ENCODE measurements at regions of chr5 and their contacts with region 1.

Region 1: GRCh38 chr5:73431204-73431851 is 17.2 kb downstream of the FOXD1 start:
- DNase-seq: no peak
- H3K4me3 ChIP-seq: no peak overlapping the region
- H3K27ac ChIP-seq: no peak overlapping the region
- H3K27me3 ChIP-seq: no peaks in the 10 kb centered on the region
- CTCF ChIP-seq: no peak

Region 2: DNA sequence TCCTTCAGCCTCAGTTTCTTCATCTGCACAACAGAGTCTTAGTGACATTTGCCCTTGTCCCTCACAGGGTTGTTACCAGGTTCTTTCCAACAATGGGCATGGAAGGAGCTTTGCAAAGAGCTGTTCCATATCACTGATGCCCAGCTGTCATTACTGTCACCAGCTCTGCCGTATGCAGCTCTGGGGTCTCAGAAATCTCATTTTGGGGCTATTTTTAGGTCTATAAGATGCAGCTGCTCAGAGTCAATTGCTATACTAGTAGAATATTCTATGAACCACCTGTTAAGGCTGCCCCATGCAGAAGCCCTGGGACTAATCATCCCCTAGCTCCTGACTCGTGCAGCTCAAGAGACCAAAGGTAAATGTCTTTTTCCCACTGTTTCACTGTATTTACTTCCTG is 720.0 kb before region 1 on chr5:
- CTCF ChIA-PET with region 1: no interaction called
- POLR2A ChIA-PET with region 1: no interaction called
- DNase-seq: no peak
- H3K4me3 ChIP-seq: no peak overlapping the region
- H3K27ac ChIP-seq: no peak overlapping the region
- H3K27me3 ChIP-seq: peaks cover 28% of the 10 kb centered on the region
- CTCF ChIP-seq: no peak

Region 3: DNA sequence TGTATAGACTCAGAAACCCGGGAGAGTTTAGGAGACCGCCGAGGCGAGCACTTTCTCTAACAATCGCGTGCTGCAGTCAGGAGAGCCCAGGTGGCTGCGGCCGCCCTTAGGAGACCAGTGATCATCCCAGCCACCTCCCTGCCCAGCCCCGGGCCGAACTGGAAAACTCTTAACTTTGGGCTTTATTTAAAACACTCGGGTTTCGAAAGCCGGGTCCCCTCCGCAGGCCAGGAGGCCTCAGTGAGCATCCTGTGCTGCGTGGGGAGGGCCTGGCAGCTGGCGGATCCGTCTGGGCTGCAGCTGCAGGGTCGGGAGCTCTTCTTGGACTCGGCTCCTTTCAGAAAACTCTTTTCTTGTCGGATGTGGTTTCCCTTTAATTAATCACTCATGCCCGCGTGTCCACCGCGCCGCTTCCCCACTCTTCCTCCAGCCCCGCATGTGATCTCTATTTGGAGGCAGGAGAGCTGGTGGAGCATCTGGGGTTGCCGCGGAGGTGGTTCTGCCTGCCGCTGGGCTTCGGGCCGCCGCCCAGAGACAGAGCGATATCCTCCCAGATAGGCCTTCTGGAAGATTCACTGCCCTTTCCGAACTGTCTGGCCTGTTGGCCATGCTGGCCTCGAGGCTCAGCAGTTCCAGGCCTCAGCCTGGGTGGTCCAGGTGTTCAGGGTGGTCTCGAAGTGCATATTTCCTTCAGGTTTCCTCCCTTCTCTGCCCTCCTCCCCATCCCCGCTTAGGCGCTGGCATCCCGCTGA is 198.9 kb before region 1 on chr5:
- CTCF ChIA-PET with region 1: no interaction called
- POLR2A ChIA-PET with region 1: interaction called, 10 read pairs
- DNase-seq: no peak
- H3K4me3 ChIP-seq: no peak overlapping the region
- H3K27ac ChIP-seq: peak overlapping the region; percentile 39
- H3K27me3 ChIP-seq: no peaks in the 10 kb centered on the region
- CTCF ChIP-seq: no peak

Region 4: DNA sequence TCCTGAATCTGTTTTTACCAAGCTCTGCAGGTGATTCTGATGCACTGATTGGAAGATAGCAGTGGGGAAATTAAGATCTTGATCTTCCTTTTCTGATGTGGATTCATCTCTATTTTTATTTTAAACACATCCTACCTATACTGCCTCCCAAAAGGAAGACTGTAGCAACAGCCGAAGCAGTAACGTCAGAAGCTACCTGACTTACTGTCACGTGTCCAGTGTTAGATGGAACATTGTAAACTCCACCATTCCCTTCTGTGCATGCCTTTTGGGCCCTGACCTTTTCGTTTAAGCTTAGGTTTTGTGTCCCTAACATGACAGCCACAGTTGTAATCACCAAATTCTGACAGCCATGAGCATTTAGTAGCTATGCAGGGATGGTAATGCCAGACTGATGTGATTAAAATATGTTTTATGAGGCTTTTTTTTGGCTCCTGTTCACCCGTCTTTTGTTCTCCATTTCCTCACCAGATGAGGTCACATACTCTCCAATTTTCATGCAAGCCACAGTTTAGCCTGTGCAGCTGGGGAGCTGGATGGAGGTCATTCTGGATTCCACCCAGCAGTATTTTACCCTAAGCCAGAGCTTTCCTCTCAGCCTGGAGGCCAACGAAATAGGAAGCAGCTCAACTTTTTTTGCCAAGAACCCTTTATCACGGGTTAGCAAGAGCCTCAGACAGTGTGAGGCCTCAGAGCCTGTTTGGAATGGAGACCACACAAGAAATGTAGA is 32.9 kb after region 1 on chr5:
- CTCF ChIA-PET with region 1: no interaction called
- POLR2A ChIA-PET with region 1: no interaction called
- DNase-seq: peak; percentile 59
- H3K4me3 ChIP-seq: no peak overlapping the region
- H3K27ac ChIP-seq: peak overlapping the region; percentile 31
- H3K27me3 ChIP-seq: peaks cover 4% of the 10 kb centered on the region
- CTCF ChIP-seq: no peak

Region 5: GRCh38 chr5:73482383-73483136 is 51.2 kb after region 1 on chr5:
- CTCF ChIA-PET with region 1: no interaction called
- POLR2A ChIA-PET with region 1: no interaction called
- DNase-seq: peak; percentile 47
- H3K4me3 ChIP-seq: no peak overlapping the region
- H3K27ac ChIP-seq: no peak overlapping the region
- H3K27me3 ChIP-seq: peaks cover 5% of the 10 kb centered on the region
- CTCF ChIP-seq: no peak